Heart right ventricle (tissue), 16 donors: ENCODE measurements at regions of chr1 and their contacts with region 1.

Region 1: GRCh38 chr1:19563324-19564097 is 78.2 kb upstream of the CAPZB start:
- DNase-seq: peak; percentile 66 to 85
- ATAC-seq: peak; percentile 82 to 93 (median 88)
- H3K4me3 ChIP-seq: peak overlapping the region in 9 of 10 donors; percentile 8 to 48 (median 32)
- H3K27ac ChIP-seq: peak overlapping the region; percentile 40 to 87 (median 76)
- H3K4me1 ChIP-seq: peaks cover 0 to 31% (median 21%) of the 10 kb centered on the region in 9 donors
- H3K27me3 ChIP-seq: no peaks in the 10 kb centered on the region
- CTCF ChIP-seq: no peak

Region 2: DNA sequence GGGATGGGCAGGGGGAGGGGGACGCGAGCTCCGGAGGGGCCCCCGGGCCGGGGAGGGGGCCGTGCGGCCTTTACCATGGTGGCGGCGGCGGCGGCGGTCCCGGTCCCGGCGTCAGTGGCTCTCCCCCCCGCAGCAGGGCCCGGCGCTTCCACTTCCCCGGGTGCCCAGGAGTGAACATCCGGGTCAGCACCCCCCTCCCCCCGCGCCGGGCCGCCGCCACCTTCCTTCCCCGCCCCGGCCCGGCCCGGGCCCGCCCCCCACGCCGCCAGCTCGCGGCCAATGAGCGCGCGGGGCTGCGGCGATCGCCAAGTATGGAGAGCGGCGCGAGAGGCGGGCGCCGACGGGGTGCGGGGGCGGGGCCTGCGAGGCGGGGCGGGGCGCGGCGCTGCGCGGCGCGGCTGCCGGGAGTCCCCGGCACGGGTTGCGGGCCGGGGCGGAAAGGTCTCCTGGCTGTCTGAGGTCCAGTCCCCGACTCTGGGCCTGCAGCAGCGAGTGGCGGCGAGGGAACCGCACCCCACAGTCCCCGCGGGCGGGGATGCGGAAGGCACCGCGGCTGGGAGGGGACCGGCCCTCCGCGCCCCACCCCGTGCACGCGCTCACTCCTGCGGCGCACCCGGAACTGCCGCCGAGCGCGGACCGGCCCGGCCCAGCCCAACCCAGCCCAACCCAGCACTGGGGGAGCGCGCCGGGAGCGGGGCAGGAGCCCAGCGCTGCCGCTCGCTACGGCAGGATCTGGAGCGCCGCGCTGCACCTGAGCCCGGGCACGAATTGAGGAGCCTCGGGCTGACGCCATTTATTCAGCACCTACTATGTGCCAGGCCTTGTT is 77.9 kb before region 1 on chr1 and contains the start of gene CAPZB:
- intact Hi-C with region 1: no loop called
- DNase-seq: peak; percentile 96 to 97
- ATAC-seq: peak; percentile 88 to 94 (median 93)
- H3K4me3 ChIP-seq: peak within 1 kb of the TSS; percentile 79 to 100 (median 100)
- H3K27ac ChIP-seq: peak within 1 kb of the TSS; percentile 94 to 100 (median 100)
- H3K4me1 ChIP-seq: peaks cover 29 to 64% (median 60%) of the 10 kb centered on the region in 9 donors
- H3K27me3 ChIP-seq: no peaks in the 10 kb centered on the region
- CTCF ChIP-seq: no peak
- total RNA-seq, gene CAPZB: 207 to 307 (median 228) TPM

Region 3: GRCh38 chr1:19504796-19505692 is 58.5 kb before region 1 on chr1:
- intact Hi-C with region 1: loop called in 2 of 10 experiments (anchors 1 to 10 kb)
- DNase-seq: peak in 1 of 2 donors; percentile 44
- ATAC-seq: peak; percentile 72 to 91 (median 82)
- H3K4me3 ChIP-seq: peak overlapping the region in 3 of 10 donors; percentile 2 to 16 (median 2)
- H3K27ac ChIP-seq: peak overlapping the region; percentile 62 to 91 (median 84)
- H3K4me1 ChIP-seq: peaks cover 9 to 71% (median 45%) of the 10 kb centered on the region in 9 donors
- H3K27me3 ChIP-seq: no peaks in the 10 kb centered on the region
- CTCF ChIP-seq: no peak

Region 4: DNA sequence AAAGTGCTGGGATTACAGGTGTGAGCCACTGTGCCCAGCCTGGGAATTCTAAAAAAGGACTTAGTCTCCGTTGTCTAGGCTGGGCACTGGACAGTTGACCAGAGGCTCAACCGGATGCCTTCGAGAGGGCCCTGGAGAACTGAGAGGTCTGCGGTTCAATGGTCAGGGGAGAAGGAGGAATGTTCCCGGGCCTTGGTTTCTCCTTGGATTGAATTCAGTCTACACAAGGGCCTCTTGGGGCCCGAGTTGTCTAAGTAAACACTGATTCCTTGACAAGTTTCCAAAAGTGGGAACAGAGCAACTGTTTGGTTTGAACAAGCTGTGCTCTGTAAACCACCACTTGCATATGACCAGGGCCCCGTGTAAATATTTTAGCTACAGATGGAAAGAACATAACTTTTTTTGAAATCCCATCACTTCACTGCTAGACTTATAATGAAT is 49.1 kb before region 1 on chr1:
- intact Hi-C with region 1: loop called in 1 of 10 experiments (anchors 10 kb)
- DNase-seq: peak; percentile 34 to 65
- ATAC-seq: peak; percentile 79 to 90 (median 87)
- H3K4me3 ChIP-seq: no peak overlapping the region
- H3K27ac ChIP-seq: peak overlapping the region; percentile 37 to 77 (median 56)
- H3K4me1 ChIP-seq: peaks cover 0 to 49% (median 0%) of the 10 kb centered on the region in 9 donors
- H3K27me3 ChIP-seq: no peaks in the 10 kb centered on the region
- CTCF ChIP-seq: no peak

Region 5: GRCh38 chr1:20348326-20348915 is 784.9 kb after region 1 on chr1:
- intact Hi-C with region 1: no loop called
- DNase-seq: no peak
- ATAC-seq: no peak
- H3K4me3 ChIP-seq: no peak overlapping the region
- H3K27ac ChIP-seq: no peak overlapping the region
- H3K4me1 ChIP-seq: no peaks in the 10 kb centered on the region
- H3K27me3 ChIP-seq: peaks cover 0 to 17% (median 10%) of the 10 kb centered on the region in 7 donors
- CTCF ChIP-seq: no peak